Lower lobe of right lung (tissue), 2 donors: ENCODE measurements at regions of chr1 and their contacts with region 1.

Region 1: GRCh38 chr1:63615768-63616420 is 22.7 kb downstream of the PGM1 start:
- DNase-seq: no peak
- ATAC-seq: peak; percentile 71 to 80
- H3K4me3 ChIP-seq: no peak overlapping the region
- H3K27ac ChIP-seq: no peak overlapping the region
- H3K4me1 ChIP-seq: peaks cover 32% of the 10 kb centered on the region
- H3K27me3 ChIP-seq: no peaks in the 10 kb centered on the region
- CTCF ChIP-seq: peak; percentile 84

Region 2: GRCh38 chr1:64121766-64122385 is 506.0 kb after region 1 on chr1:
- intact Hi-C with region 1: loop called (anchors 10 kb)
- DNase-seq: no peak
- ATAC-seq: no peak
- H3K4me3 ChIP-seq: no peak overlapping the region
- H3K27ac ChIP-seq: no peak overlapping the region
- H3K4me1 ChIP-seq: no peaks in the 10 kb centered on the region
- H3K27me3 ChIP-seq: no peaks in the 10 kb centered on the region
- CTCF ChIP-seq: no peak

Region 3: DNA sequence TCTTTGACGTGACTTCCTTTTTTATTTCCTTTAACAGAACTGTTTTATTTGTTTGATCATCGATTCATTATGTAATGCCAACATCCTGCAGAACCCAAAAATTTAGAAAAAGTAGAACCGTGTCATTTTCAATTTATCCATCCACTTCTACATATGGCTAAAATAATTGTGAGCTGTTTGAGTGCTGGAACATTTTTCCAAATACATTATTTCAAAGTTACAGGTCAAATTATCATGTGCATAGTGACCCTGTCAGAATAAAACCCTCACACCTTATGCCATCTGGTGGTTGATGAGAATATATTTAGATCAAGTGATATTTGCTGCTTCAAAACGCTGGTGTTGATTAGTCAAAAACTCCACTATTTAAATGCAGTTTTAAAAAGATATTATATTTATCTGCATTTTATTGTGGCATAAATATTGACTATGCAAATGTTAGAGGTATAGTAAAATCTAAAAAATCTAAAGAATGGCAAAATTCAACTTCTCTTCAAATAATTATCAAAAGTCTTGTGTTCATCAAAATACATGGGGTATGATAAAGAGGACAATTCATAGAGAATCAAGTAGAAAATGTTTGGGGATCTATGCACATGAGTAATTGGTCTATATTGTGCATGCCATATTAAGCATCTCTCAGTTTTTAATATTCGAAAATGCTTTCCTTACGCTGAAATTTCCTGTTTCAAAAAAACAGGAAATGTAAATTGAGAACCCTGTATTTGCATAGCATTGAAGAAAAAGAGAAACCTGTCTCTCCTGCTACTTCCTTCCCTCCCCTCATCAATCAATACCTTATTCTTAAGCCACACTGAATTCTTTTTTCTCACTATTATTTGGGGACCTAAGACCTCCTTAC is 627.2 kb after region 1 on chr1:
- intact Hi-C with region 1: loop called (anchors 10 kb)
- DNase-seq: no peak
- ATAC-seq: peak in 1 of 2 donors; percentile 57
- H3K4me3 ChIP-seq: no peak overlapping the region
- H3K27ac ChIP-seq: no peak overlapping the region
- H3K4me1 ChIP-seq: peaks cover 4% of the 10 kb centered on the region
- H3K27me3 ChIP-seq: no peaks in the 10 kb centered on the region
- CTCF ChIP-seq: peak; percentile 37